Heart left ventricle (tissue), 16 donors: ENCODE measurements at regions of chr1 and their contacts with region 1.

Region 1: GRCh38 chr1:228073857-228074545 is 8.5 kb upstream of the ARF1 start:
- DNase-seq: peak in 2 of 5 donors; percentile 18 to 25
- ATAC-seq: peak in 3 of 4 donors; percentile 18 to 35 (median 19)
- H3K4me3 ChIP-seq: no peak overlapping the region
- H3K27ac ChIP-seq: no peak overlapping the region
- H3K4me1 ChIP-seq: peaks cover 0 to 4% (median 0%) of the 10 kb centered on the region in 12 donors
- H3K27me3 ChIP-seq: peaks cover 0 to 9% (median 0%) of the 10 kb centered on the region in 9 donors
- CTCF ChIP-seq: peak in 5 of 12 donors; percentile 7 to 28 (median 26)
- POLR2A ChIP-seq: no peak

Region 2: GRCh38 chr1:227748496-227749182 is 325.4 kb before region 1 on chr1:
- intact Hi-C with region 1: loop called in 1 of 10 experiments (anchors 10 kb)
- DNase-seq: peak in 3 of 5 donors; percentile 30 to 62 (median 46)
- ATAC-seq: peak; percentile 66 to 79 (median 72)
- H3K4me3 ChIP-seq: no peak overlapping the region
- H3K27ac ChIP-seq: peak overlapping the region in 10 of 12 donors; percentile 70 to 99 (median 84)
- H3K4me1 ChIP-seq: peaks cover 0 to 83% (median 36%) of the 10 kb centered on the region in 12 donors
- H3K27me3 ChIP-seq: no peaks in the 10 kb centered on the region
- CTCF ChIP-seq: no peak
- POLR2A ChIP-seq: no peak

Region 3: GRCh38 chr1:227816750-227817446 is 257.1 kb before region 1 on chr1:
- intact Hi-C with region 1: no loop called
- DNase-seq: no peak
- ATAC-seq: no peak
- H3K4me3 ChIP-seq: no peak overlapping the region
- H3K27ac ChIP-seq: no peak overlapping the region
- H3K4me1 ChIP-seq: no peaks in the 10 kb centered on the region
- H3K27me3 ChIP-seq: no peaks in the 10 kb centered on the region
- CTCF ChIP-seq: no peak
- POLR2A ChIP-seq: no peak

Region 4: DNA sequence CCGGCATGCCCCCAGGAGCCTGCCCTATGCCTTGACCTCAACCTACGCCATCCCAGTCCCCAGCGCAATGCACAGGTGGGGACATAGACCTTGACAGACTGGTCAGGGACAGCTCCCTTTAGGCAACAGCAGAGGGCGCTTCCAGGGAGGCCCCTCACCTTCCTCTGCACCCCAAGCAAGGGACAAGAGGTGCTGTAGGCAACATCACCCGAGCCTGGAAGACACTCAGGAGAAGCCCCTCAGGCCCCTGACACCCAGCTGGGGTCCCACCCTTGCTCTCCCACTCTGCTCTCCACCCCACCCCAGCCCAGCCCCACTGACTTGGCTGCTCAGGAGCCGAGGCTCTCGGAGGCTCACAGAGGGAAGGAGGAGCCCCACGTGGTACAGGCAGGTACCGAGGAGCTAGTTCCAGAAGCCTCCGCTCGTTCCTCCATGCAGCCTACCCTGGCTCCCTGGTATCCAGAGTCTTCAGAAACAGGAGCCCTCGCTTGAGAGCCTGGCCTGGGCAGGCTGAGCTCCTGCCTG is 69.6 kb before region 1 on chr1:
- intact Hi-C with region 1: loop called in 1 of 10 experiments (anchors 5 kb)
- DNase-seq: no peak
- ATAC-seq: peak in 1 of 4 donors; percentile 58
- H3K4me3 ChIP-seq: no peak overlapping the region
- H3K27ac ChIP-seq: no peak overlapping the region
- H3K4me1 ChIP-seq: peaks cover 0 to 16% (median 0%) of the 10 kb centered on the region in 12 donors
- H3K27me3 ChIP-seq: peaks cover 43 to 77% (median 63%) of the 10 kb centered on the region in 9 donors
- CTCF ChIP-seq: peak in 8 of 12 donors; percentile 5 to 38 (median 30)
- POLR2A ChIP-seq: no peak